Posterior vena cava (tissue), 2 donors: ENCODE measurements at regions of chr3 and their contacts with region 1.

Region 1: DNA sequence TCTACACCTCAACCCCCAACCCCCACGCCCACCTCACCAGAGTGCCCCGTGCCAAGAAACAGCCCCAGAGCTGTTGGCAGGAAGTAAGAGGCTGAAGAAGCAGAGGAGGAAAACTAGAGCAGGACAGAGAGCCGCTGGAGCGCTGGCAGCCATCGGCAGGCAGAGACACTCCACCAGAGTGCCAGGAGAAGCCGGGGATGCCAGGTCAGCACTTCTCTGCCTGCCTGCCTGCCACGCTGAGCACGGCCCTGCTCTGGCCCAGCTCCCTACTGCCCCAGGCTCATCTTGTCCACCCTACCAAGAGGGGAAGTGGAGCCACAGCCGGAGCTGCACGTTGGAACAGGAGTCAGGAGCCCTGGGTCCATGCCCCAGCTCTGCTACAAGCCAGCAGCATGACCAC is 29.7 kb downstream of the CACNA2D2 start:
- DNase-seq: no peak

Region 2: DNA sequence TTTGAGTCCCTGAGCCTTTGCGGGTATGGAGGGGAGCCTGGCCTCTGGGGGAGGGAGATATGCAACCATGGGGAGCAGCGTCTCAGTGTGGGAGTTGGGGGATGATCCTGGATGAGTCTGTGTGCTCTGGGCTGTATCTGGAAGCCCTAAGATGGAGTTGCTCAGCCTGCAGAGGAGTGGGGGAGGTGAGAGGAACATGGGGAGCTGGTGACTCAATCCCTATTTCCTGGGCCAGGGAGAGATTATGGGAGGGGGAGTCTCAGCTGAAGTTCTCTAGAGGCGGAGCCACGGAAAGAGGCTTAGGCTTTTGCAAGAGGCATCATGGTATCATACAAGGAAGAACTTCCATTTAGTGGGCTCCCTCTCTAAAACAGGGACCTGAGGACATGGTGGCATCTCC is 54.9 kb before region 1 on chr3:
- intact Hi-C with region 1: loop called in 1 of 2 experiments (anchors 1 kb)
- DNase-seq: no peak